ENCODE measurements at regions of chr6 and their contacts with region 1.

Region 1: DNA sequence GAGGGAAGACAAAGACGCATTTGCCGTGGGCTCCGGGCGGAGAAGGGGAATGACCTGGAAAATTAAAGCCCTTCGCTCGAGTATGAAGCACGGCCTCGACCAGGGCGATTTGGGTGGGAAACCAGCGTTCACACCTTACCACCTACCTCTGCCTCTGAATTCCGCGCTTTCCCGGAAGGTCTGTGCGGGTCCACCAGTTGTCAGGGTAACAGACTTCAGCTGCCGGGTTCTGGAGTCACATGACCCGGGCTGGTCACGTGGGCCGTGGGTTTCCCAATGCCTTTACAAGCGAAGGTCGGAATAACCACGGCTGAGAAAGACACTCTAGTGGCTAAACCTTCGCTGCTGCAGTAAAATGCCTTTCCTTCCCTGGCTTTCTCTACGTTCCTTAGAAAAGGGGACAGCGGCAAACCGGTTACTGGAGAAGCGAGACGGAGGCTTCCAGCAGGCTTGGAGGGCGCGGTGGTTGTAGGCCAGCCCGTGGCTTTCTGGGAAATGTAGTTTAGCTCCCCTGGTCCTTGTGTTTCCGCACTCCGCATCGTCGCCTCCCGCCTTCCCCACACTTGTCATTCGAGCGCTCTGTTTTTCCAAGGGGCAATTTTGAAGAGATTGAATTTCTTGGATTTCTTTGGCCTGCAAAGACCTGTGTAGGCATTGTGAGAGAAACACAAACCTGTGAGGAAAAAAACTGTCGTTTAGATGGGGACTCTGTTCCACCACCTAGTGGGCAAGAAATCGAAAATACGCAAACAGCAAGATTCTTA is at the start of gene CEP162:
- DNase-seq: peak; percentile 95 to 100 (median 96)
- H3K4me3 ChIP-seq: peak within 1 kb of the TSS; percentile 59 to 99 (median 85)
- H3K27ac ChIP-seq: peak within 1 kb of the TSS; percentile 79 to 99 (median 95)
- H3K27me3 ChIP-seq: peaks cover 0 to 15% (median 0%) of the 10 kb centered on the region in 45 donors
- CTCF ChIP-seq: peak; percentile 55 to 84 (median 72)
- total RNA-seq, gene CEP162: 6.2 to 20.6 (median 11.2) TPM

Region 2: DNA sequence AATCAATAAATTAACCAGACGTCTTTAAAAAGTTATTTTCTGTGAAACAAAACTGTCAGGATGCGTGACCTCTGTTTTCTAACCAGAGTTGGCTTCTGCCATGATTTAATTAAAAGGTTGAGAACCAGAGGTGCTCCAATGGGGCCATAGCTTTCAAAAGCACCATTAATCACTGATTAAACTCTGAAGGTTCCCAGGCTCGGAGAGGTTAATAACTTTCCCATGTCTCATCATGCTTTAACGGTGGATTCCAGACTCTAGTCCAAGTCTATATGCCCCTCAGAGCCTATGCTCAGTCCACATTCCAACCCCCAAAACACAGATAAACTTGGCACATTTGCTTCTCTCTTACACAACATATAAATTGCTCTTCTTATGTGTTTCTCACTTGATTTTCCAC is 614.2 kb before region 1 on chr6:
- intact Hi-C with region 1: loop called in 1 of 2 experiments (anchors 5 kb)
- DNase-seq: no peak
- H3K4me3 ChIP-seq: no peak overlapping the region
- H3K27ac ChIP-seq: no peak overlapping the region
- H3K27me3 ChIP-seq: no peaks in the 10 kb centered on the region
- CTCF ChIP-seq: no peak

Region 3: DNA sequence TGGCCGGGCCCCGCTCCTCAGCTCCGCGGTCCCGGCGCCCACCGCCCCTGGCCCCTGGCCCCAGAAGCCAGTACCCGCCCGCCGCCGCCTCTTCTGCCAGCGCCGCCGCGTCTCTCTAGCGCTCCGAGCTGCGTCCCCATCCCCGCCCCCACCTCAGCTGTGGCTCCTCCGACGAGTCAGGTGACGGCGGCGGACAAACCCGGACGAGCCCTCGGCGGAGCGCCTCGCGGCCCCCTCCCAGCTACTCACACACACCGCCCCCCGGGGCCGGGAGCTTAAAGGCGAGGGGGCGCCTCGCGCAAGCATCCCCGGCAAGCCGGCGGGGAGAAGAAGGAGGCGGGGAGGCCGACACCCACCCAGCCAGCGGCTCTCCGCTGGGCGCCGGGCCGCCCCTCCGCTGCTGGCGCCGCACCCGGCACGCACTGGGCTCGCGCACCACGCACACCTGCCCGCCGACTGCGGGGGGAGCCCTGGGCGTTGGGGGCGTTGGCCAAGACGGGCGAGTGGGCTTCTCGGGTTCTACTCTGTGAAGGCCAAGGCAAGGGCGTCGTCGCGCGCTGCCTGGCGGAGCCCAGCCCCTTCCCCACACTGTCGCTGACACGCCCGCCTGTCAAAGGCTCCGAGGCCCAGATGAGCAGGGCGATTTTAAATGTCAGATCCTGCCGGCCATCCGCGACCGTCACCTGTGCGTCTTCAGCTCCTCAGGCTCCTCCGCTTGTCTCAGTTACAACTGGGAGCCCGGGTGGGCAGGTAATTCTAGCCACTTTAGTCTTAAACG is 518.5 kb before region 1 on chr6 and contains the start of gene SNAP91:
- intact Hi-C with region 1: loop called in 1 of 2 experiments (anchors 5 kb)
- DNase-seq: peak; percentile 61 to 91 (median 86)
- H3K4me3 ChIP-seq: peak within 1 kb of the TSS; percentile 53 to 91 (median 78)
- H3K27ac ChIP-seq: peak within 1 kb of the TSS in 58 of 59 donors; percentile 42 to 93 (median 83)
- H3K27me3 ChIP-seq: no peaks in the 10 kb centered on the region
- CTCF ChIP-seq: peak in 2 of 56 donors; percentile 12 to 19
- total RNA-seq, gene SNAP91: 75.1 to 334 (median 237) TPM

Region 4: DNA sequence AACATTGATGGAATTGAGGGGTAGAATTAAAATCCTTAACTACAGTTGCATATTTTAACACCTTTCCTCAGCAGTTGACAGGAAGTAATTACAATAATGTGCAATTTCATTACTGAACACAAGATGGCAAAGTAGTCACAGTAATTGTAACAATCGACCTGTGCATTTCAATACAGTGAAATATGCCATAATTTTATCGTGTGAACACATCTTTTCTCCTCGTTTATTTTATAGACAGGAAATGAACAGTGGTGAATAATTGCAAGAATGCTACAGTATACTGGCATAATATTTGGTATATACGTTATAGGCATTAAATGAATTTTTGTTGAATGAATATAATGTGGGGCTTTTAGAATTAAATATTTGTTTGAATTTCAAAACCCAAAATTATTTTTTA is 343.1 kb before region 1 on chr6:
- intact Hi-C with region 1: loop called in 1 of 2 experiments (anchors 10 kb)
- DNase-seq: no peak
- H3K4me3 ChIP-seq: no peak overlapping the region
- H3K27ac ChIP-seq: no peak overlapping the region
- H3K27me3 ChIP-seq: no peaks in the 10 kb centered on the region
- CTCF ChIP-seq: peak; percentile 57 to 90 (median 75)

Region 5: GRCh38 chr6:84103029-84103428 is 124.6 kb before region 1 on chr6:
- intact Hi-C with region 1: no loop called
- DNase-seq: no peak
- H3K4me3 ChIP-seq: no peak overlapping the region
- H3K27ac ChIP-seq: no peak overlapping the region
- H3K27me3 ChIP-seq: no peaks in the 10 kb centered on the region
- CTCF ChIP-seq: no peak

Measured in dorsolateral prefrontal cortex (tissue), 120 donors.